Cardiac septum (tissue), 1 donor: ENCODE measurements at regions of chr5 and their contacts with region 1.

Region 1: DNA sequence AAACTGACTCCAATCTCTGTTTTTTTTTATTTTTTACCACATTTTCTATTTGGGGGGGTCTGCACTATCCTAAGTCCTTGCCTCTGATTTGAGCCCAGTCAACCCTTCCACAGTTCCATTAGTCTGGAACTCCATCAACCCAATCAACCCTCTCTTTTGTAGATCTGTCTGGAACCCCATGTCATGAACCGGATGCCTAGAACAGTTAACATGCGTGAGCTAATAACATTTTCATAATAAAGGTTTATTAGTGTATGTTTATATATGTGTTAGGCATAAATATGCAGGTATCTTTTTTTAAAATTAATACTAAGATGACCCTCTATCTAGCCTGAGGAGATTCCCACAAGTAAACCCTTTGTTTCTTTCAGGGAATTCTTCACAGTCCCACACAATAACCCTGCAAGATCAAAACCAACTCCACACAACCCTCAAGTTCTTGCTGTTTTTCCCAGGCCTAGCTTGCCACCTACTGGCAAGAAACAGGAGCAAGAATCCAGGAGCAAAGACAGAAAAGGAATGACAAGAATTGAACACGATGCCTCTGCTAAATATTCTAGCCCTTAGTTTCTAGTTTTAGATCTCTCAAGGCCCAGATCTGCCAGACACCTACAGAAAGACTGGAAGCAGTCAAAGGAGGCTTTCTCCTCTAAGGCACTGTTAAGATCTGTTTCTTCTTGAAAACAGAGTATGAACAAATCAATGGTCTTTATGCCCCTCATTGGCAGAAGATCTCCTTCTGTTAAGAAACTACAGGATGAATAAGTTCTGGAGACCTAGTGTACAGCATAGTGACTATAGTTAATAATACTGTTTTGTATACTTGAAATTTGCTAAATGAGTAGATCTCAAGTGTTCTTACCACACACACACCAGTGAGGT is 100.4 kb downstream of the TRIM36 start:
- DNase-seq: no peak

Region 2: GRCh38 chr5:113612060-113612496 is 1457.2 kb before region 1 on chr5:
- intact Hi-C with region 1: loop called (anchors 2 kb)
- DNase-seq: no peak

Region 3: DNA sequence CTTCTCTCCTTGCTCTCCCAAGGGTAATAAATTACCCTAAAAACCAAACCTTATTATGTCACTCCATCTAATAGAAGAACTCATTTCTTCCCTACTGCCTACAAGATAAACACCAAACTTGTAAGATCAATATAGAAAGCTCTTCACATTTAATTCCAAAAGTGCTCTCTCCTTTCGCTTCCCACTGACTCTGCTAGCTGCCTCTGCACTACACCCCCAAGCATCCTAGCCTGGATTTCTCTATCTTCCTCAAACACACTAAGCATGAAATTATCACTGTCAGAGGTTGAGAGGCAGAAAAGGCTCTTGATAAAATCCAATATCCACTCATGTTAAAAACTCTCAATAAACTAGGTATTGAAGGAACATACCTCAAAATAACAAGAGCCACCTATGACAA is 545.1 kb before region 1 on chr5:
- intact Hi-C with region 1: no loop called
- DNase-seq: no peak

Region 4: GRCh38 chr5:114898602-114899001 is 170.7 kb before region 1 on chr5:
- intact Hi-C with region 1: no loop called
- DNase-seq: no peak